AG04449 (cell line): ENCODE measurements at regions of chr1 and their contacts with region 1.

Region 1: GRCh38 chr1:161225534-161226319 is at the start of gene TOMM40L:
- DNase-seq: peak; percentile 99
- H3K4me3 ChIP-seq: peak within 1 kb of the TSS; percentile 95
- CTCF ChIP-seq: peak; percentile 77

Region 2: GRCh38 chr1:161098210-161099068 is 127.3 kb before region 1 on chr1 and contains the start of gene KLHDC9:
- CTCF ChIA-PET with region 1: no interaction called
- POLR2A ChIA-PET with region 1: no interaction called
- DNase-seq: no peak
- H3K4me3 ChIP-seq: peak within 1 kb of the TSS; percentile 61
- CTCF ChIP-seq: peak; percentile 38

Region 3: DNA sequence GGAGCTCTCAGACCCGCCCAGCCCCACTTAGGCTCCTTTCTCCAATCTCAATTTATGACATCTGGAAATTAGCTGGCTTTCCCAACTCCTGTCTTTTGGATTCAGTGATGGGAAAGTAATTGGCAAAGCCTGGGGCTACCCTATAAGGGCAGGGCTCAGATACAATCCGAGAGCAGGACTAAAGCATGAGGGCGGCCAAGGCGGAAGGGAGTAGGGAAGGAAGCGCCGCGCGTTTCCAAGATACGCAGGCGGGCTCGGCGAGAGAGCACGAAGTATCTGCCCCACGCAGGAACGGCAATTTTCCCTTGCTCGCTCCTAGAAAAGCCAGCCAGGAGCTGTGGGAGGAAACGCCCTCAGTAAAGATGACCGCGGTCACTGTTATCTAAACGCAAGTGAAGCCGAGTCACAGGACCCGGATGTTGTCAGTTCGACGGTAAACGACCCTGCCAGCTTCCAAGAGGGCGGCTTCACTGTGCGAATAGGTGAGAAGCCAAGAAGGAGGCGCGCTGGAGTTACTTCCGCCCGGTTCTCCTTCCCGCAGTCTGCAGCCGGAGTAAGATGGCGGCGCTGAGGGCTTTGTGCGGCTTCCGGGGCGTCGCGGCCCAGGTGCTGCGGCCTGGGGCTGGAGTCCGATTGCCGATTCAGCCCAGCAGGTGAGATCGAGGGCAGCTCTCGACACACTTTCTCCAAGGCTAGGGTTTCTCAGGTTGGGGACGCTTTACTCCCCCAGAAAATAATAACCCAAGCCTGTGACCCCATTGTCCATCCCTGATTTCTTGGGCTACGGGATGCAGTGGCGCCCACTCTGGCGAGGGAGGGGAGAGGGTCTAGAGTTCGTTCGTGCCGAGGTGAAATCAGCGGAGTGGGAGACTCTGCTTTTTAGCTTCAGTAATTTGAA is 23.6 kb before region 1 on chr1 and contains the start of gene NDUFS2:
- CTCF ChIA-PET with region 1: interaction called, 758 read pairs
- POLR2A ChIA-PET with region 1: interaction called, 6 read pairs
- DNase-seq: peak; percentile 95
- H3K4me3 ChIP-seq: peak within 1 kb of the TSS; percentile 95
- CTCF ChIP-seq: peak; percentile 47

Region 4: GRCh38 chr1:161258439-161259344 is 33.0 kb after region 1 on chr1 and contains the start of gene PCP4L1:
- CTCF ChIA-PET with region 1: interaction called, 37 read pairs
- POLR2A ChIA-PET with region 1: no interaction called
- DNase-seq: no peak
- H3K4me3 ChIP-seq: peak within 1 kb of the TSS; percentile 48
- CTCF ChIP-seq: no peak

Region 5: DNA sequence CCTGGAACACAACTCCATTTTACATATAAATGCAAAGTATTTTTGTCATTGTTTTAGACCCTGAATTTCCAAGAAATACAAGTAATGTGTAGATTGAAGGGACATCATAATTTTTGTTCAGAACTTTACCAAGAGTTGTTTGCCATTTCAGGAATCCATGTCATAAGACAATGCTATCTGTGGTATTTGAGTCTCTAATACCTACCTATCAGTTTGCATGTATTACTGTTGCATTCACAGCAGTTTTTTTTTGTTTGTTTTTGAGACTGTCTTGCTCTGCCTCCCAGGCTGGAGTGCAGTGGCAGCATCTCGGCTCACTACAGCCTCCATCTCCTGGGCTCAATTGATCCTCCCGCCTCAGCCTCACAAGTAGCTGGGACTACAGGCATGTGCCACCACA is 66.9 kb after region 1 on chr1:
- CTCF ChIA-PET with region 1: interaction called, 191 read pairs
- POLR2A ChIA-PET with region 1: no interaction called
- DNase-seq: no peak
- H3K4me3 ChIP-seq: no peak overlapping the region
- CTCF ChIP-seq: no peak

Region 6: DNA sequence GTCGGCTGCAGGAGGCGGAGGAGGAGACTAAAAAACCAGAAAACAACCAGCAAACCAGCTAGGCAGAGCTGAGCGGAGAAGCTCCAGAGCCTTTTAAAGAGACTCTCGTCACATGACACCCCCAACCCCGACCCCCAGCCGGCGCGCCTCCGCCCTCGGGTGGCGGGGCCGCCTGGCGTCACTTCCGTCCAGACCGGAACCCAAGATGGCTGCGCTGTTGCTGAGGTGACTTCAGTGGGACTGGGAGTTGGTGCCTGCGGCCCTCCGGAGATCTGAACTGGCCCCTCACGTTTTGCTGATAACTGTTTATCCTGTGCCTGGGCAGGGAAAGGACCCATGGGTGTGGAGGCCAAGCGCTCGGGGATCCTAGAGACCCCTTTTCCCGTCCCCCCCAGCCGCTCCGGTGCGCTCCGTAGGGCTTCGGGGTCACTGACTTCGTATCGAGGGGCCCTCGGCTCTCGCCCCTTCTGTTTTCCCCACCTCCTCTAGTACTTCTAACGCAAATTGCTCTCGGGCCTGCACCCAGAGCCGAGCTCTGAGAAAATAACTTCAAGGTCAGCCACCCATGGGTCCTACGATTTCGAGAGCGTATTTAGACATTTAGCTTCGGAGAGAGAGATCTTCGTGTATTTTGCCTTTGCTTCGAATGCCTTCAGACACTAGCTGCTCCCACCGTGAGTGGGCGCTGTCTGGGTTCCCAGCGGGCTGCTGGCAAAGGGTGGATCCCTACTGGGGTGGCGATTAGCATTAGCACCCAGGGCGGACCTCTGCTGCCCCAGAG is 88.7 kb after region 1 on chr1 and contains the start of gene SDHC:
- CTCF ChIA-PET with region 1: interaction called, 22 read pairs
- POLR2A ChIA-PET with region 1: interaction called, 4 read pairs
- DNase-seq: no peak
- H3K4me3 ChIP-seq: peak within 1 kb of the TSS; percentile 95
- CTCF ChIP-seq: peak; percentile 65

Region 7: DNA sequence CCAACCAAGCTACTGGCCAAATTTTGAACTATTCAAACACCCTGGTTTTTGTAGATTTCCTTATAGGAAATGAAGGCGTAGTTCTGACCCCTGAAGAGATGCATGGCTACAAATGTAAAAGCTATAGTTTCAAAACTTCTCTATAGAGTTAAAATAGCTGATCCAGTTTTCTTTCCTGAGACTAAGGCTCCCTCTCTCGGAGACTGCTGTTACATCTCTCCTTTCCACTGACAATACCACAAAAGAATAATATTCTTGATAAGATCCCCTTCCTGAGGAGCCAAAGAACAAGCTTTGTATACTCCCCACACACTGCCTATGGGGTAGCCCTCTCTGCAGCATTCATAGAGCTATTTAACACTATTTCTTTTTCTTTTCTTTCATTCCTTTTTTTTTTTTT is 148.6 kb after region 1 on chr1:
- CTCF ChIA-PET with region 1: interaction called, 270 read pairs
- POLR2A ChIA-PET with region 1: no interaction called
- DNase-seq: no peak
- H3K4me3 ChIP-seq: no peak overlapping the region
- CTCF ChIP-seq: peak; percentile 11